Activated CD4-positive, alpha-beta memory T cell treated with anti-CD3 and anti-CD28 coated beads for 36 hours (primary cell): ENCODE measurements at regions of chr6 and their contacts with region 1.

Region 1: GRCh38 chr6:14046476-14047068 is 71.0 kb upstream of the CD83 start:
- DNase-seq: peak; percentile 64
- H3K4me3 Mint-ChIP-seq: no peak overlapping the region
- H3K27ac Mint-ChIP-seq: no peak overlapping the region
- H3K4me1 Mint-ChIP-seq: no peaks in the 10 kb centered on the region
- H3K27me3 Mint-ChIP-seq: peaks cover 20% of the 10 kb centered on the region

Region 2: GRCh38 chr6:13795041-13795750 is 251.4 kb before region 1 on chr6:
- CTCF ChIA-PET with region 1: interaction called, 12 read pairs
- POLR2A ChIA-PET with region 1: no interaction called
- intact Hi-C with region 1: no loop called
- DNase-seq: peak; percentile 93
- H3K4me3 Mint-ChIP-seq: no peak overlapping the region
- H3K27ac Mint-ChIP-seq: no peak overlapping the region
- H3K4me1 Mint-ChIP-seq: peaks cover 24% of the 10 kb centered on the region
- H3K27me3 Mint-ChIP-seq: no peaks in the 10 kb centered on the region

Region 3: GRCh38 chr6:13908955-13909381 is 137.6 kb before region 1 on chr6:
- CTCF ChIA-PET with region 1: interaction called, 70 read pairs
- POLR2A ChIA-PET with region 1: no interaction called
- intact Hi-C with region 1: loop called (anchors 1 kb)
- DNase-seq: peak; percentile 49
- H3K4me3 Mint-ChIP-seq: no peak overlapping the region
- H3K27ac Mint-ChIP-seq: no peak overlapping the region
- H3K4me1 Mint-ChIP-seq: no peaks in the 10 kb centered on the region
- H3K27me3 Mint-ChIP-seq: peaks cover 28% of the 10 kb centered on the region

Region 4: DNA sequence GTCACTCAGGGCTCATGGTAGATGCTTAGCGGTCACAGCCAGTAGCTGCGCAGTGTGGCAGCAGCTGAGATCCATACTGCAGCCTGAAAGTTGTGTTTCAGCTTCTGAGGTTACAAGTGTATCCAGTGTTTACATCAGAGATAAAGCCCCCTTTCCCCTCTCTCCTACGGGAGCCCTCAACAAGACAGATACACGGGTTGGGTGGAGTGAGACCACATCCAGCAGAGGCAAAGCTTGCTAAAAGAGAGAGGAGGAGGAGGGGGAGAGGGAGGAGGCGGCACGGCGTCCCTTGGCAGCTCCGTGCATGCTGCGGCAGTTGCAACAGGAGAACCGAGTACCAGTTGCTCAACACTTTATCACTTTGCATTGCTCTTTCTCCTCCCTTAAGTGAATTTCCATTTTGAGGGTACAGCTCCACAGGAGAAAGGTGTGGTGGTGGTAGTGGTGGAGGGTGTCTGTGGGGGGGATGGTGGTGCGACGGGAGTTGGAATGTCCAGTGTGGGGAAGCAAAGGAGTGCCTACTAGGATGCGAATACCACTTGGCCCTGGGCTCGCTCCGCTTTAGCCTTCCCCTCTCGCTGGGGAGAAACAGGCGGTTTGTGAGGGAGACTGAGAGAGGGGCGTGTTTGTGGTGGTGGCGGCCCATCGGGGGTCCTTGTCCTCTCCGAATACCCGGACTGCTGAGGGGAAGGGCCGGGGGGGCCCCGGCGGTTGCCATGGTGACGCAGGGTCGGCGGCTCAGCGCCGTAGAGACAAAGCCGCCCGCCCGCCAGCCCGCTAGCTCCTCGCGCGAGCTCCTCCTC is 122.2 kb before region 1 on chr6:
- CTCF ChIA-PET with region 1: interaction called, 6 read pairs
- POLR2A ChIA-PET with region 1: no interaction called
- intact Hi-C with region 1: loop called (anchors 5 kb)
- DNase-seq: no peak
- H3K4me3 Mint-ChIP-seq: peak overlapping the region; percentile 69
- H3K27ac Mint-ChIP-seq: no peak overlapping the region
- H3K4me1 Mint-ChIP-seq: peaks cover 14% of the 10 kb centered on the region
- H3K27me3 Mint-ChIP-seq: peaks cover 56% of the 10 kb centered on the region

Region 5: DNA sequence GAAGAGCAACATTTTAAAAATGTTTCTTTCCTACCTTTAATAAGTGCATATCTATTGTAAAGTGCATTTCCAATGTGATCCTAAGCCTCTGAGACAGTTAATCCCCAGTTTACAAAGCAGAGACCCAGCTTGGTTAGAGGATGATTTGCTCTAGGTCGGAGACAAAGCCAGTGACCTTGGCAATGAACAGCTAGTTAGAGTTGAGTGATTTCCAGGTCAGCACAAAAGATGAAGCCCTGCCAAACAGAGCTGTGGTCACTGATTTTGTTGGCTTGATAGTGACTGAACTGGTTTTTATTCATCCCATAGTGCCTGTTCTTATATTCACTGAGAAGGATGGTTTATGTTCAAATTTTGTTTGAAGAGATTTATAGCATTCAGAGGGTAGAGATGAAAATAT is 14.4 kb after region 1 on chr6:
- CTCF ChIA-PET with region 1: interaction called, 73 read pairs
- POLR2A ChIA-PET with region 1: no interaction called
- intact Hi-C with region 1: loop called (anchors 2 kb)
- DNase-seq: no peak
- H3K4me3 Mint-ChIP-seq: no peak overlapping the region
- H3K27ac Mint-ChIP-seq: no peak overlapping the region
- H3K4me1 Mint-ChIP-seq: no peaks in the 10 kb centered on the region
- H3K27me3 Mint-ChIP-seq: peaks cover 17% of the 10 kb centered on the region

Region 6: DNA sequence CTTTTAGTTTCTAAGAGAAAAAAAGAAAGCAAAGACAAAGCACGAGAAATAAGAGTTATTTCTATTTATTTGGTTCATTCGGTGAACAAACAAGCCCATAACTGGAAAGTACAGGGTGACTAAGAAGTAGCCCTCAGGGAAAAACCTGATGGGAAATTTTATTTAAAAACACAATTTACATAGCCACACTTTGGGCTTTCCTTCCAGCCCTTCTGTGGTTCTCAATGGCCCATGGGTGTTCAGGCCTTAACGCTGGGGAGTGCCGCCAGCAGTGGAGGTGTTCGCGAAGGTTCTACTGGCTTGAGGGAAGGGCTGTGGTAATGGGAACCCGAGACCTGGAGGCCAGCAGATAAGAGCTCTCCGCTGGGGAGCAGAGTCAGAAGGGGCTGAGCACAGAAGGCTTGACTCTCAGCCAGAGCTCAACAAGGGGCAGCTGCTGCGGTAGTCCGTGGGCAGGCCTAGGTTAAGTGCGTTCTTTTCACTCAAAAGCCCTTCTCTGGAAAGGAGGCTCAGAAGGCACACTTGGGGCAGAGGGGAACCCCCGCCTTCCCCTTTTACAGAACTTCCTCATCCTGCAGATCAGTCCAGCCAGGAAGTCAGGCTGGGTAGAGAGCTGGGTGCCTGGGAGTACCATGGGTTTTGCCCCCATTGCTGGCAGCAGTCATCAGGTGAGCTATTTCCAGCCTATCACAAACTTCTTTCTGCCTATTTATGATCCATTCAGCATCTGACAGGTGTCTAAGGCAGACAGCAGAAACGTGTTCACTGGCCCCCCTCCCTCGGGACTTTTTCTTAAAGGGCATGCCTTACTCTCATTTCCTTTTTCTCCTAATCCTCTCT is 62.2 kb after region 1 on chr6:
- CTCF ChIA-PET with region 1: interaction called, 10 read pairs
- POLR2A ChIA-PET with region 1: no interaction called
- intact Hi-C with region 1: no loop called
- DNase-seq: peak; percentile 56
- H3K4me3 Mint-ChIP-seq: peak overlapping the region; percentile 40
- H3K27ac Mint-ChIP-seq: peak overlapping the region; percentile 74
- H3K4me1 Mint-ChIP-seq: peaks cover 32% of the 10 kb centered on the region
- H3K27me3 Mint-ChIP-seq: peaks cover 8% of the 10 kb centered on the region